Activated B cell treated with CpG ODN at 0.5 μM for 24 hours (primary cell): ENCODE measurements at regions of chr7 and their contacts with region 1.

Region 1: DNA sequence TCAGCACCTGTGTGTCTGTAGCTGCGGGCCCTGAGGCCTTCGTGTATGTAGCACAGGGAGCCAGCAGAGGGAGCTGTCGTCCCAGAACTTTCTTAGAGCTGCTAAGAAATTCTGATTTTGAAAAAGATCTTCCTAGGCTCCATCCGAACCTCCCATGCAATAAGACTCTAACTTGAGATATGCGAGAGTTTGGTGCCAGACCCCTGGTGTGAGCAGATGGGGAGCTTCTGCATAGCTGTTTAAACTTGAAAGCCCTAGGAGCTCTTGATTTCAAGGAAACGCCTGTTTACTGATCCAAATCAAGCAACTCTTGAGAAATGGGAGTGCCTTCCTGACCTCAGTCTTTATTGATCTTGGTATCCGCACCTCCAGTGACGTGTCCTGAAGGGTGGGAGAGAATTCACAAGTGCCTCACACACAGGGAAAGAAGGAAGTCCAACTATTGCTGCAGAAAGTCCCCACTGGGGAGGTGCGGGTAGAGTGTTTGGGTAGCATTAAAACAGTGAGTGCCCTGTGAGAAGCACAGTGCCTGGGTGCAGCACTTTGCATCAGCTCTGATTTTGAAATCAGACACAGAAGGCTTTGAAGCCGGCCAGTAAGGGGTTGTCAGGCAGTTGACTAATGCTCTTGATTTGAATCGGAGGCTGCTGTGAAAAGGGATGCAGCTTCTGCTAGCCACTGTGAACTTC is 66.4 kb upstream of the STRIP2 start:
- DNase-seq: peak; percentile 50
- ATAC-seq: peak; percentile 85
- H3K4me3 Mint-ChIP-seq: peak overlapping the region; percentile 61
- H3K27ac Mint-ChIP-seq: peak overlapping the region; percentile 46
- H3K4me1 Mint-ChIP-seq: peaks cover 27% of the 10 kb centered on the region
- H3K27me3 Mint-ChIP-seq: no peaks in the 10 kb centered on the region
- CTCF ChIP-seq: no peak

Region 2: DNA sequence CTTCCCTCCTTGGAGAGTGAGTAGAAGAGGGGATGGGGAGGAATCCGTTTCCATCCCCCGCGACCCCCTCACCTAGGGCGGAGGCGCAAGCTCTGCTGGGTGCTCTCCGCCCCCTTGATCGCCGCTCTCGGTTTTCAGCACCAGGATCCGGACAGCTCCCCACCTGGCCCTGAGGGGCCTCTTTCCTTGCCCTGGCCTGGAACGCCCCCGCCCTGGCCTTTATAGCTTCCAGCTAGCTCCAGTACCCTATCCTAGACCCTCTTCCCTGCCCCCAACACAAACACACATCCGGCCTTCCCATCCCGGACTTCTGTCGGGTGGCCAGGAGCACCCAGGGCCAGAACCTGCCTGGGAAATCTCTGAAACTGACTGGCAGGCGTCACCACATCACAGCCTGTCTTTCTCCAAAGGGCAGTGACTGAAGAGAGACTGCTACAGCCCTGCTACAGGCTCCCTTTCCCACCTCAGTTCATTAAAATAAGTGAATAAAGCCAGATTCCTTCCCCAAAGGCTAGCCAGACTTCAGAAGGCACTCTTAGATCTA is 1199.1 kb before region 1 on chr7:
- CTCF ChIA-PET with region 1: no interaction called
- POLR2A ChIA-PET with region 1: no interaction called
- intact Hi-C with region 1: no loop called
- DNase-seq: no peak
- ATAC-seq: no peak
- H3K4me3 Mint-ChIP-seq: peak overlapping the region; percentile 41
- H3K27ac Mint-ChIP-seq: no peak overlapping the region
- H3K4me1 Mint-ChIP-seq: peaks cover 37% of the 10 kb centered on the region
- H3K27me3 Mint-ChIP-seq: peaks cover 45% of the 10 kb centered on the region
- CTCF ChIP-seq: no peak

Region 3: GRCh38 chr7:129381710-129382484 is 14.1 kb after region 1 on chr7:
- CTCF ChIA-PET with region 1: interaction called, 52 read pairs
- POLR2A ChIA-PET with region 1: interaction called, 5 read pairs
- intact Hi-C with region 1: no loop called
- DNase-seq: no peak
- ATAC-seq: no peak
- H3K4me3 Mint-ChIP-seq: no peak overlapping the region
- H3K27ac Mint-ChIP-seq: no peak overlapping the region
- H3K4me1 Mint-ChIP-seq: no peaks in the 10 kb centered on the region
- H3K27me3 Mint-ChIP-seq: no peaks in the 10 kb centered on the region
- CTCF ChIP-seq: no peak

Region 4: GRCh38 chr7:129388333-129389098 is 20.7 kb after region 1 on chr7:
- CTCF ChIA-PET with region 1: interaction called, 13 read pairs
- POLR2A ChIA-PET with region 1: no interaction called
- intact Hi-C with region 1: no loop called
- DNase-seq: no peak
- ATAC-seq: no peak
- H3K4me3 Mint-ChIP-seq: no peak overlapping the region
- H3K27ac Mint-ChIP-seq: no peak overlapping the region
- H3K4me1 Mint-ChIP-seq: no peaks in the 10 kb centered on the region
- H3K27me3 Mint-ChIP-seq: no peaks in the 10 kb centered on the region
- CTCF ChIP-seq: no peak

Region 5: DNA sequence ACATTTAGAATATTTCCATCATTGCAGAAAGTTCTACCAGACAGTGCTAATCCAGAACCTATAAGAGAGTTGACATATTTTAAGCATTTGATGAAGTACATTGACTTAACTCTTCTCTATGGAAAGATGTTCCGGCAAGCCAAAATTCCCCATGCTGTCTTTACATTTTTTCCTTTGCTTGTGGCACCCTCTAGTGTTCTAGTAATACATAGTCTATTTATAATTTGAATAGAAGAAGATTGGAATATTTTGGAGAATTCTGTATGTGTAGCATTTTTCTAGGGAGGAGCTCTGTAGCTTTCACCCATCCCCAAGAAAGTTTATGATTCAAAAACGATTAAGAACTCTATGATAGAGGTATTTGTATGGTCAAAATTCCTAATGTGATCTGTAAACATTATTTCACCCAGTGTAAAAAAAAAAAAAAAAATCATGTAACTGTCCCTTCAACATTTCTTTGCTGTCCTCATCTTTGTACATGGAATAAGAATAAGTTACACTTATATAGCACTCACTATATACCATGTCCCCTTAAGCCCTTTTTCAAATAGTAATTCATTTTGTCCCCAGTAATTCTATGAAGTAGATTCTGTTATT is 276.9 kb after region 1 on chr7:
- CTCF ChIA-PET with region 1: interaction called, 19 read pairs
- POLR2A ChIA-PET with region 1: no interaction called
- intact Hi-C with region 1: loop called (anchors 1 kb)
- DNase-seq: no peak
- ATAC-seq: no peak
- H3K4me3 Mint-ChIP-seq: no peak overlapping the region
- H3K27ac Mint-ChIP-seq: no peak overlapping the region
- H3K4me1 Mint-ChIP-seq: peaks cover 3% of the 10 kb centered on the region
- H3K27me3 Mint-ChIP-seq: no peaks in the 10 kb centered on the region
- CTCF ChIP-seq: no peak

Region 6: DNA sequence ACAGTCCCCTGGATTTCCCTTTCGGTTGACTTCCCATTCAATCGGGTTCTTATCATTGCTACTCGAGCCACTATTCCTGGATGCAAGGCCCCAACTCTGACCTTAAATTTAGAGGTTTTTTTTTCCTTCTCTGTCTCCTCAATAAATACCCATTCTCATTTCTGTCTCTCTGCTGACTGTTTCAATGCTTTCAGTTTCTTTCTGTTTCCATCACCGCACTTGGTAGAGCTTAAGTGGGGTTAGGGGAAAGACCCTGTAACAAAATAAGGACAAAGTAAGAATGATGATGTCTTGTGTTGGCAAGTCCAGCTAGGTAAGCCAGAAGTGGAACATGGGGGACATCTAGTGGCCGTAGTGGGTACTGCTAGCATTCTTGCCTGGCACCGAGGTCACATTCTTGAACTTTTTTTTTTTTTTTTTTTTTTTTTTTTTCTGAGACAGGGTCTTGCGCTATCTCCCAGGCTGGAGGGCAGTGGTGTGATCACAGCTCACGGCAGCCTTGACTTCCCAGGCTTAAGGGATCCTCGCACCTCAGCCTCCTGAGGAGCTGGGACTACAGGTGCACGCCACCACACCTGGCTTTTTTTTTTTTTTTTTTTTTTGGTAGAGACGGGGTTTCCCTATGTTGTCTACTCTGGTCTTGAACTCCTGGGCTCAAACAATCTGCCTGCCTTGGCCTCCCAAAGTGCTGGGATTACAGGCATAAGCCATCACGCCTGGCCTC is 643.0 kb after region 1 on chr7:
- CTCF ChIA-PET with region 1: interaction called, 19 read pairs
- POLR2A ChIA-PET with region 1: no interaction called
- intact Hi-C with region 1: loop called (anchors 1 kb)
- DNase-seq: peak; percentile 74
- ATAC-seq: peak; percentile 91
- H3K4me3 Mint-ChIP-seq: no peak overlapping the region
- H3K27ac Mint-ChIP-seq: no peak overlapping the region
- H3K4me1 Mint-ChIP-seq: peaks cover 9% of the 10 kb centered on the region
- H3K27me3 Mint-ChIP-seq: no peaks in the 10 kb centered on the region
- CTCF ChIP-seq: peak; percentile 51